CD4-positive, alpha-beta memory T cell (primary cell): ENCODE measurements at regions of chr12 and their contacts with region 1.

Region 1: GRCh38 chr12:69157023-69157655 is 82.2 kb upstream of the CPSF6 start:
- DNase-seq: peak; percentile 82 to 85 (median 83)
- H3K4me3 ChIP-seq: peak overlapping the region in 1 of 2 donors; percentile 6
- H3K4me3 Mint-ChIP-seq: peak overlapping the region; percentile 46 to 77 (median 70)
- H3K27ac ChIP-seq: no peak overlapping the region
- H3K27ac Mint-ChIP-seq: peak overlapping the region in 3 of 7 donors; percentile 56 to 69 (median 63)
- H3K4me1 ChIP-seq: peaks cover 20% of the 10 kb centered on the region
- H3K4me1 Mint-ChIP-seq: peaks cover 18 to 31% (median 22%) of the 10 kb centered on the region in 4 donors
- H3K27me3 ChIP-seq: no peaks in the 10 kb centered on the region
- H3K27me3 Mint-ChIP-seq: no peaks in the 10 kb centered on the region

Region 2: GRCh38 chr12:69173368-69173767 is 16.2 kb after region 1 on chr12:
- CTCF ChIA-PET with region 1: interaction called, 18 read pairs
- POLR2A ChIA-PET with region 1: interaction called, 3 read pairs
- intact Hi-C with region 1: no loop called
- DNase-seq: no peak
- H3K4me3 ChIP-seq: no peak overlapping the region
- H3K4me3 Mint-ChIP-seq: no peak overlapping the region
- H3K27ac ChIP-seq: no peak overlapping the region
- H3K27ac Mint-ChIP-seq: no peak overlapping the region
- H3K4me1 ChIP-seq: no peaks in the 10 kb centered on the region
- H3K4me1 Mint-ChIP-seq: peaks cover 0 to 4% (median under 1%) of the 10 kb centered on the region in 4 donors
- H3K27me3 ChIP-seq: no peaks in the 10 kb centered on the region
- H3K27me3 Mint-ChIP-seq: peaks cover 0 to 3% of the 10 kb centered on the region in 2 donors

Region 3: DNA sequence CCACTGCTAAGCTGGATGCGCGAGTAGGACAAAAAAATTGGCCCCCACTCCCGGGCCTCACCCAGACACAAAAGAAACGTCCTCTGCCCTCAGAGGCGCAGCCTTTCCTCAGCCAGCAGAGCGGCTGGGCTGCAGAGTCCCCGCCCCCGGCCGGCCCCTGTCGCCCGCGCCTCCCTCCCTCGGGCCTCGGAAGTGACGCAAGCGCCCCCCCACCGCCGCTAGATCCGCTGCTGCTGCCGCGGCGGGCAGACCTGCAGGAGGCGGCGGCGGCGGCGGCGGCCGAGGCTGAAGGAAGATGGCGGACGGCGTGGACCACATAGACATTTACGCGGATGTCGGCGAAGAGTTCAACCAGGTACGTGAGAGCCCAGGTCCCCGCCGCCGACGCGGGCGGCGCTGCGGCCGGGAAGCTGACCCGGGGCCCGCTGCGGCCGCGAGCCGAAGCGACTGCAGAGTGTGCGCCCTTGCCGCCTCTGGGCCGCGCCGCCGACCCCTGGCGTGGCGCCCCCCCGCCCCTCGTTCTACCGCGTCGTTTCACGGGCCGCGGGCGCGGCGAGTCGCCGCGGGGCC is 82.3 kb after region 1 on chr12 and contains the start of gene CPSF6:
- CTCF ChIA-PET with region 1: interaction called, 45 read pairs
- POLR2A ChIA-PET with region 1: interaction called, 24 read pairs
- intact Hi-C with region 1: loop called (anchors 1 kb)
- DNase-seq: peak; percentile 95 to 96 (median 95)
- H3K4me3 ChIP-seq: peak within 1 kb of the TSS; percentile 60 to 94
- H3K4me3 Mint-ChIP-seq: peak within 1 kb of the TSS; percentile 96 to 100 (median 98)
- H3K27ac ChIP-seq: peak within 1 kb of the TSS; percentile 89
- H3K27ac Mint-ChIP-seq: peak within 1 kb of the TSS; percentile 98 to 100 (median 99)
- H3K4me1 ChIP-seq: peaks cover 52% of the 10 kb centered on the region
- H3K4me1 Mint-ChIP-seq: peaks cover 36 to 57% (median 47%) of the 10 kb centered on the region in 4 donors
- H3K27me3 ChIP-seq: no peaks in the 10 kb centered on the region
- H3K27me3 Mint-ChIP-seq: no peaks in the 10 kb centered on the region
- total RNA-seq, gene CPSF6: 109 to 120 TPM

Region 4: DNA sequence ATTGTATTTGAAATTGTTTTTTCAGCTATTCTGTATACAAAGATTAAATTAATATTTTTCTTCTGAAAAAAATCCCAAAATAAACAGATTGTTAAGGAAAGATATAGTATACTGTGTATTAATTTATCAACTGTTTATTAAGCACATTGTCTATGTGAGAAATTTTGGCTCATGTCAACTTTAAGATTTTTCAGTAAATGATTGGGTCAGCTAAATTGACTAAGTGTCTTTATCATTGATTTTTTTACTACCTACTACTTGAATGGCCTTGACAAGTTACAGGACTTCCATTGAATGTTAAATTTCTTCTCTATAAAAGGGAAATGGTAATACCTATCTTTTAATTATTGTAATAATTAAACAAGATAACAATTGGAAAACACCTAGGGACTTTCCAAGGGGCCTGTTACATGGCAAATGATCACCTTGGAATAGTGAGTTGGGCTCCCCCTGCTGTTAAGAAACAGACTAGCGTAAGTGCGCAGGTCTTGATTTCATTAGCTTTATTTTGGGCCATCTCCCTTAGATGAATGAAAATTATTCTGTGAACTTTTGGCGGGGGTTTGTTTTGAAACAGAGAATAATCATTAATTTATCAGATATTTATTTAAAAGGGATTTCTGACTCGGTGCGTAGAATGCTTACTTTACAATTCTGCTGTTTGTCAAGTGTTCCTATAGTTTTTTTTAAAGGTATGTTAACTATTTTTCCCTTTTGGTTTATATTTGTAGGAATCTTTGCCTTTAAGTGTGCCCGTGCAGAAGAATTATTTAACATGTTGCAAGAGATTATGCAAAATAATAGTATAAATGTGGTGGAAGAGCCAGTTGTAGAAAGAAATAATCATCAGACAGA is 413.6 kb after region 1 on chr12:
- CTCF ChIA-PET with region 1: interaction called, 30 read pairs
- POLR2A ChIA-PET with region 1: no interaction called
- intact Hi-C with region 1: loop called (anchors 1 kb)
- DNase-seq: peak; percentile 59 to 76 (median 66)
- H3K4me3 ChIP-seq: no peak overlapping the region
- H3K4me3 Mint-ChIP-seq: no peak overlapping the region
- H3K27ac ChIP-seq: peak overlapping the region; percentile 39
- H3K27ac Mint-ChIP-seq: peak overlapping the region in 5 of 7 donors; percentile 24 to 71 (median 50)
- H3K4me1 ChIP-seq: no peaks in the 10 kb centered on the region
- H3K4me1 Mint-ChIP-seq: peaks cover 0 to 4% (median 2%) of the 10 kb centered on the region in 4 donors
- H3K27me3 ChIP-seq: no peaks in the 10 kb centered on the region
- H3K27me3 Mint-ChIP-seq: no peaks in the 10 kb centered on the region

Region 5: GRCh38 chr12:69639400-69640016 is 482.4 kb after region 1 on chr12:
- CTCF ChIA-PET with region 1: interaction called, 14 read pairs
- POLR2A ChIA-PET with region 1: no interaction called
- intact Hi-C with region 1: loop called (anchors 1 kb)
- DNase-seq: peak; percentile 40 to 53 (median 46)
- H3K4me3 ChIP-seq: no peak overlapping the region
- H3K4me3 Mint-ChIP-seq: no peak overlapping the region
- H3K27ac ChIP-seq: no peak overlapping the region
- H3K27ac Mint-ChIP-seq: peak overlapping the region in 1 of 7 donors; percentile 59
- H3K4me1 ChIP-seq: no peaks in the 10 kb centered on the region
- H3K4me1 Mint-ChIP-seq: peaks cover 0 to 2% (median 0%) of the 10 kb centered on the region in 4 donors
- H3K27me3 ChIP-seq: no peaks in the 10 kb centered on the region
- H3K27me3 Mint-ChIP-seq: no peaks in the 10 kb centered on the region